Common myeloid progenitor, CD34-positive (primary cell): ENCODE measurements at regions of chr4 and their contacts with region 1.

Region 1: GRCh38 chr4:102760645-102761295 is at the start of gene MANBA:
- DNase-seq: peak; percentile 83 to 94 (median 92)
- H3K4me3 ChIP-seq: peak within 1 kb of the TSS; percentile 81 to 99 (median 90)
- H3K27ac ChIP-seq: peak within 1 kb of the TSS; percentile 89 to 95
- H3K4me1 ChIP-seq: peaks cover 12 to 38% (median 25%) of the 10 kb centered on the region in 4 experiments
- H3K27me3 ChIP-seq: no peaks in the 10 kb centered on the region

Region 2: GRCh38 chr4:102792361-102792936 is 31.7 kb after region 1 on chr4:
- CTCF ChIA-PET with region 1: interaction called, 5 read pairs
- POLR2A ChIA-PET with region 1: interaction called, 12 read pairs
- DNase-seq: no peak
- H3K4me3 ChIP-seq: no peak overlapping the region
- H3K27ac ChIP-seq: no peak overlapping the region
- H3K4me1 ChIP-seq: peaks cover 3 to 11% (median 7%) of the 10 kb centered on the region in 4 experiments
- H3K27me3 ChIP-seq: no peaks in the 10 kb centered on the region

Region 3: DNA sequence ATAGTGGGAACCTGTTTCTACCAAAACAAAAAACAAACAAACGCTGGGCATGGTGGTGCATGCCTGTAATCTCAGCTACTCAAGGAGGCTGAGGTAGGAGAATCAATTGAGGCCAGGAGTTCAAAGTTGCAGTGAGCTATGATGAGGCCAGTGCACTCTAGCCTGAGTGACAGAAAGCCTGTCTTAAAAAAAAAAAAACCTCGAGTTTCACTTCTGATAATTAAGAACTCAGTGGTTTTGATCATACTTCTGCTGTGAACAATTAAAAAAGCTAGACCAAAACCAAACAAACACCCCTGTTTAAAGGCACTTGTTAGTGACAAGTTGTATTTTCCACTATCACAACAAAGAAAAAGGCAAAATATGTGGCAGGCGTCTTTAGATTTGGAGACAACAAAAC is 81.6 kb after region 1 on chr4:
- CTCF ChIA-PET with region 1: no interaction called
- POLR2A ChIA-PET with region 1: no interaction called
- DNase-seq: no peak
- H3K4me3 ChIP-seq: no peak overlapping the region
- H3K27ac ChIP-seq: no peak overlapping the region
- H3K4me1 ChIP-seq: no peaks in the 10 kb centered on the region
- H3K27me3 ChIP-seq: no peaks in the 10 kb centered on the region

Region 4: DNA sequence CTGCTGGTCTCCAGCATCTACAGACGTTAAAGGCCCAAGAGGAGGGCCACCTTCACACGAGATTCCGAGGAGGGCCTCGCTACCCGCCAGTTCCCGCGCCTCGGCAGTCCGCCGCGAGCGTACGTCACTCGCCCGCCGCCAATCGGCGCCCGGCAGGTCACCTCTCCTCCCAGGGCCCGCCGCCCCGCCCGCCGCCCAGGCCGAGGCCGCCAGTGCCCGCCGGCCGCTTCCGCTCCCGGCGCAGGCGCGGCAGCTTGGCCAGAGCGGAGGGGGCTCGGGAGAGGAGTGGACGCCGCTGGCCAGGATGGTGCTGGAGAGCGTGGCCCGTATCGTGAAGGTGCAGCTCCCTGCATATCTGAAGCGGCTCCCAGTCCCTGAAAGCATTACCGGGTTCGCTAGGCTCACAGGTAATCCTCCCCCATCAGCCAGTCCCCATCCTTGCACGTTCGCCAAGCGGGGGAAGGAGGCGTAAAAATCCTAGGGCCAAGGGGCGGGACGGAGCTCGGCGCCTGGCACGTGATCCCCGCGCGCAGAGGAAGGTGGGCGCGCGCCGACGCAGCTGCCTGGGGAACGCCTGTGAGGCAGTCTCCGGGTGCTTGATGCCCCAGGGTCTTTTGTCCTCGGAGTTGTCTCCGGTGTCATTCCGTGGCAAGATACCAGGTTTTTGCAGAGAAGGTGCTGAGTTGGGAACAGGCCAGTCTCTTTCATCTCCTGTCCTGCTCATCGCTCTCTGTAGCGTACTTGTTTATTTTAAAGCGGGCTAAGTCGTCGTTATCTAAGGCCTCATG is 108.2 kb after region 1 on chr4 and contains the start of gene CISD2:
- CTCF ChIA-PET with region 1: no interaction called
- POLR2A ChIA-PET with region 1: interaction called, 10 read pairs
- DNase-seq: peak; percentile 97 to 98 (median 98)
- H3K4me3 ChIP-seq: peak within 1 kb of the TSS; percentile 71 to 92 (median 82)
- H3K27ac ChIP-seq: peak within 1 kb of the TSS; percentile 95 to 98
- H3K4me1 ChIP-seq: peaks cover 25 to 65% (median 43%) of the 10 kb centered on the region in 4 experiments
- H3K27me3 ChIP-seq: no peaks in the 10 kb centered on the region

Region 5: DNA sequence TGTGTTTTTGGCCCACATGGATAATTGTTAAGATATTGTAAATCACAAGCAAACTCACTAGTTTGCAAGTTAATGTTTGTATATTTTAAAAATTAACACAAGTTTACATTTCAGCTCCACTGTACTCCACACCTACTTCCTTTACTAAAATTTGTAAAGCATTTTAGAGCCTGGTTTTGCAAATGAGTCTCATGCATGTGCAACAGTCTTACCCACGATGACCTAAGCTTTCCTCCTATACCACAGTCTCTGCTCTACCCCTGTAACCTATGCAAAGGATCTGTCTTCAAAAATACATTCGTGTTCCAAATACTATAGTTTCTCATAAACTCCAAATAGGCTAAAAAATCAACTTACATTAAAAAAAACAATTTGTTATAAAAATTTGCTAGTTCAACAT is 328.7 kb after region 1 on chr4:
- CTCF ChIA-PET with region 1: no interaction called
- POLR2A ChIA-PET with region 1: no interaction called
- DNase-seq: no peak
- H3K4me3 ChIP-seq: no peak overlapping the region
- H3K27ac ChIP-seq: no peak overlapping the region
- H3K4me1 ChIP-seq: peaks cover 0 to 8% (median 0%) of the 10 kb centered on the region in 4 experiments
- H3K27me3 ChIP-seq: no peaks in the 10 kb centered on the region